CD8-positive, alpha-beta T cell (primary cell): ENCODE measurements at regions of chr13 and their contacts with region 1.

Region 1: DNA sequence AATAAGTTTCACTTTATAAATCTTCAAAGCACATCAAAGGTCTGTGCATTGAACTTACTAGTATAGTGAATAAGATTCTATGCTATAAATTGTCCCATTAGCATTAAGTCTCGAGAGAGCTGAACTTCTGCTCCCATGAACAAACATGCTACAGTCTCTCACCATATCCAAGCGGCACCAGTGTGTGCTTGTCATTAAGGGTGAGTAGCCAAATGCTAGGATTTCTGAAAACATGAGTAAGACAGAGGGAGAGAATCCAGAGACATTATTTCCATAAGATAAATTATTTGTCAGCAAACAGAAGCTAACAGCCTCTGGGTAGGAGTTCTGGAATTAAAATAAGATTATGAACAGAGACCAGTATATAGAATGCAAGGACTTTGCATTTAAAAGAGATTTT is 2882.5 kb downstream of the PCDH9 start:
- DNase-seq: no peak
- ATAC-seq: no peak
- H3K4me3 ChIP-seq: no peak overlapping the region
- H3K4me3 Mint-ChIP-seq: no peak overlapping the region
- H3K27ac ChIP-seq: no peak overlapping the region
- H3K27ac Mint-ChIP-seq: no peak overlapping the region
- H3K4me1 ChIP-seq: no peaks in the 10 kb centered on the region
- H3K4me1 Mint-ChIP-seq: no peaks in the 10 kb centered on the region
- H3K27me3 ChIP-seq: no peaks in the 10 kb centered on the region
- H3K27me3 Mint-ChIP-seq: no peaks in the 10 kb centered on the region
- CTCF ChIP-seq: no peak

Region 2: GRCh38 chr13:63972328-63972727 is 375.3 kb before region 1 on chr13:
- CTCF ChIA-PET with region 1: no interaction called
- POLR2A ChIA-PET with region 1: no interaction called
- intact Hi-C with region 1: loop called in 1 of 2 experiments (anchors 10 kb)
- DNase-seq: no peak
- ATAC-seq: no peak
- H3K4me3 ChIP-seq: no peak overlapping the region
- H3K4me3 Mint-ChIP-seq: no peak overlapping the region
- H3K27ac ChIP-seq: no peak overlapping the region
- H3K27ac Mint-ChIP-seq: no peak overlapping the region
- H3K4me1 ChIP-seq: no peaks in the 10 kb centered on the region
- H3K4me1 Mint-ChIP-seq: no peaks in the 10 kb centered on the region
- H3K27me3 ChIP-seq: no peaks in the 10 kb centered on the region
- H3K27me3 Mint-ChIP-seq: no peaks in the 10 kb centered on the region
- CTCF ChIP-seq: no peak

Region 3: GRCh38 chr13:64397701-64398100 is 50.0 kb after region 1 on chr13:
- CTCF ChIA-PET with region 1: no interaction called
- POLR2A ChIA-PET with region 1: no interaction called
- intact Hi-C with region 1: loop called in 1 of 2 experiments (anchors 5 kb)
- DNase-seq: no peak
- ATAC-seq: no peak
- H3K4me3 ChIP-seq: no peak overlapping the region
- H3K4me3 Mint-ChIP-seq: no peak overlapping the region
- H3K27ac ChIP-seq: no peak overlapping the region
- H3K27ac Mint-ChIP-seq: no peak overlapping the region
- H3K4me1 ChIP-seq: no peaks in the 10 kb centered on the region
- H3K4me1 Mint-ChIP-seq: no peaks in the 10 kb centered on the region
- H3K27me3 ChIP-seq: no peaks in the 10 kb centered on the region
- H3K27me3 Mint-ChIP-seq: no peaks in the 10 kb centered on the region
- CTCF ChIP-seq: no peak

Region 4: GRCh38 chr13:64551755-64552154 is 204.1 kb after region 1 on chr13:
- CTCF ChIA-PET with region 1: no interaction called
- POLR2A ChIA-PET with region 1: no interaction called
- intact Hi-C with region 1: no loop called
- DNase-seq: no peak
- ATAC-seq: no peak
- H3K4me3 ChIP-seq: no peak overlapping the region
- H3K4me3 Mint-ChIP-seq: no peak overlapping the region
- H3K27ac ChIP-seq: no peak overlapping the region
- H3K27ac Mint-ChIP-seq: no peak overlapping the region
- H3K4me1 ChIP-seq: no peaks in the 10 kb centered on the region
- H3K4me1 Mint-ChIP-seq: no peaks in the 10 kb centered on the region
- H3K27me3 ChIP-seq: no peaks in the 10 kb centered on the region
- H3K27me3 Mint-ChIP-seq: no peaks in the 10 kb centered on the region
- CTCF ChIP-seq: no peak